Esophagus squamous epithelium (tissue), 5 donors: ENCODE measurements at regions of chr17 and their contacts with region 1.

Region 1: GRCh38 chr17:79393358-79394202 is 217.3 kb downstream of the RBFOX3 start:
- DNase-seq: no peak
- H3K4me3 ChIP-seq: no peak overlapping the region
- H3K27ac ChIP-seq: no peak overlapping the region
- H3K4me1 ChIP-seq: peaks cover 0 to 1% (median 0%) of the 10 kb centered on the region in 3 donors
- H3K27me3 ChIP-seq: peaks cover 0 to 100% (median 0%) of the 10 kb centered on the region in 4 donors
- CTCF ChIP-seq: peak; percentile 78 to 94 (median 89)
- POLR2A ChIP-seq: no peak

Region 2: GRCh38 chr17:79087428-79088143 is 306.0 kb before region 1 on chr17:
- intact Hi-C with region 1: loop called (anchors 2 kb)
- DNase-seq: no peak
- H3K4me3 ChIP-seq: no peak overlapping the region
- H3K27ac ChIP-seq: no peak overlapping the region
- H3K4me1 ChIP-seq: peaks cover 9 to 27% (median 11%) of the 10 kb centered on the region in 3 donors
- H3K27me3 ChIP-seq: peaks cover 0 to 33% (median 0%) of the 10 kb centered on the region in 4 donors
- CTCF ChIP-seq: peak; percentile 81 to 95 (median 88)
- POLR2A ChIP-seq: no peak

Region 3: DNA sequence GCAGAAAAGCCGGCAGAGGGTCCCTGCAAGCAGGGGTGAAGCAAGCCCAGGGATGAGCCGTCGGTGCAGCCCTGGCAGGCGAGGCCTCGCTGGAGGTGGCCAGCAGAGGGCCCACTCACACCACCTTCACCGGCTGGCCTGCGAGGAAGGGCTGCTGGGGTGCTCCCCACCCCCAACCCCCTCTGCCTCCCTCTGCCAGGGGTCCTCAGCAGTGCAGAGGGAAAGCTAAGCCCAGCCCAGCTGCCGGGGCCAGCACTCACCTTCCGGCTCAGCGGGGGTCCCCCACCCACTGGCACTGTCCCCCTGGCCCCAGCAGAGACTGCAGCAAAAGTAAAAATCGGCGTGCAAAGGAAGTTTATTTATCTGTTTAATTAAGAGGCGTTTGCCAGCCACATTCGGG is 205.5 kb before region 1 on chr17:
- intact Hi-C with region 1: loop called (anchors 5 kb)
- DNase-seq: no peak
- H3K4me3 ChIP-seq: no peak overlapping the region
- H3K27ac ChIP-seq: no peak overlapping the region
- H3K4me1 ChIP-seq: peaks cover 0 to 14% (median 5%) of the 10 kb centered on the region in 3 donors
- H3K27me3 ChIP-seq: peaks cover 3 to 100% (median 5%) of the 10 kb centered on the region in 4 donors
- CTCF ChIP-seq: peak in 5 of 6 experiments; percentile 42 to 67 (median 47)
- POLR2A ChIP-seq: no peak

Region 4: DNA sequence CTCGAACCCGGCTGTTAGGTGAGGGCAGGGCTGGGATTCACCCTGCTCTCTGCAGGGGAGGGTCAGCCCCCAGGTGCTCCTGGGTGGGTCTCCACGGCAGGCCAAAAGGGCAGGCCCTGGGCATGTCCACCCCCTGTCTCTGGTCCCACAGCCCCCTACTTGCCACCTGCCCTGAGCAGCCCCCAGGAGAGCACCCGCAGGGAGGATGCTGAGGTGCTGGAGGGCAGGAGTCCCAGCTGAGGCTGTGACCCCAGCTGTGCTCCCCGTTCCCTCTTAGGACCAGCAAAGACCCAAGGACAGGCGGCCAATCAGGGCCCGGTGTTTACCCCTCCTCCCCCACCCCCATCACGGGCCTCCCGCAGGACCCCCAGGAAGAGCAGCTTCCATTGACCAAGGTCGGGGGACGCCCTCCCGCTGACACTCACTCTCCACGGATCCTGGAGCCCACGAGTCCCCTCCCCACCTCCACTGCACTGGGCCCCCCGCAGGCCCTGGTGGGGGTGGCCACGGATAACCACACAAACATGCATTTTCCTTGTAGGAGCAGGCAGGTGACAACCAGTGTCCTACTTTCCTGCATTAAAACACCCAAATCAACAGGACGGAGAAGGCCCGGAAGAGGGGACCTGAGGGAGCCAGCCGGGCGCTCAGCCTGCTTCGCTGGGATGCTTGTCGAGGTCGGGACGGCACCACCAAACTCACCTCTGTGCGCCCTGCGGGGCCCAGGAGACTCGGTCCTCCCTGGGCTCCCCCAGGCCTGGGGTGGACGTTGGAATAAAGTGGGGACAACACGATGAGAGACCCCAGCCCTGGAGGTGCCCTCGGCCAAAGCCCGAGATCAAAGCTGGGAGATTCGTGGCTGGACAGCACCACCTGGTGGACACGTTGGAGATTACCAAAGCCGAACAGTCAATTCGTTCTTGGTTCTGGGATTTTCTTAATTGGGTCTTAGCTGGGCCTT is 314.6 kb after region 1 on chr17:
- intact Hi-C with region 1: loop called (anchors 10 kb)
- DNase-seq: no peak
- H3K4me3 ChIP-seq: peak overlapping the region in 1 of 4 donors; percentile 24
- H3K27ac ChIP-seq: no peak overlapping the region
- H3K4me1 ChIP-seq: peaks cover 0 to 20% (median 4%) of the 10 kb centered on the region in 3 donors
- H3K27me3 ChIP-seq: peaks cover 0 to 46% (median 0%) of the 10 kb centered on the region in 4 donors
- CTCF ChIP-seq: peak; percentile 55 to 86 (median 71)
- POLR2A ChIP-seq: no peak